HepG2 (cell line): ENCODE measurements at regions of chr5 and their contacts with region 1.

Region 1: DNA sequence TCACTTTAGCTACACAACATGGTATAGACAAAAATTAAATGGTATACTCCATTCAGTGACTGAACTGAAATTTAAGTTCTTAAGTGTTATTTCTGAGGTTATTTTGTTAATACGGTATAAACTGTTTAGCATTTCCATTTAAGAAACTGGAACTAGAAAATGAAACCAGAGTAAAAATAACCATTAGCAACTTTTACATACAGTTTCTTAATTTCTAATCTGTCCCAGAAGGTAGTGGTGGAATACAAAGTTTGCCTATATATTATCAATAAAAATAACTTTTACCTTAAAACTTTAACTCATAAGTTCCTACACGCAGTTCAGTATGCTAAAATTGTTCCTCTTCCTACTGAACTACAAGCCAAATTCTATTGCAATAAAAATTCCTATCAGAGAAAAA is 10.3 kb downstream of the GOLPH3 start:
- DNase-seq: no peak
- ATAC-seq: no peak
- H3K4me3 ChIP-seq: no peak overlapping the region
- H3K27ac ChIP-seq: no peak overlapping the region
- H3K4me1 ChIP-seq: peaks cover 75% of the 10 kb centered on the region
- H3K27me3 ChIP-seq: no peaks in the 10 kb centered on the region
- CTCF ChIP-seq: no peak
- EP300 ChIP-seq: no peak
- POLR2A ChIP-seq: no peak
- RAD21 ChIP-seq: no peak

Region 2: DNA sequence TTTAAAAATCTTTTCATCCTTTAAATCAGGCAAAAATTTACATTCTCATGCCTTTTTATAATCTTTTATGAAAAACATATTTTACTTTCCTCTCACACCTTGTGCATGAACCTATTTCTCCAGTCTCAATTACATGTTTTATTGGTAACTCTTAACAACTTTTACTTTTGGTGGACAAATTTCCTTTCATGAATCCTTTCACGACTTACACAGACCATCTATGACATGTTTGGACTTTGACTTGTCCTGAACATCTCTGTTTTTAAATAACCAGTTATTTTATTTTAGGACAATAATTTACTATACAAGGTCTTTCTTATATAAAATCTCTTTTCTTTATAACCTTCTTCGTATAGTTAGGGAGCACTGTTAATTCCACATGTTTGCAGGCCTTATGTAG is 175.4 kb after region 1 on chr5:
- CTCF ChIA-PET with region 1: no interaction called
- POLR2A ChIA-PET with region 1: no interaction called
- in situ Hi-C with region 1: no loop called
- intact Hi-C with region 1: loop called (anchors 10 kb)
- DNase-seq: no peak
- ATAC-seq: no peak
- H3K4me3 ChIP-seq: no peak overlapping the region
- H3K27ac ChIP-seq: no peak overlapping the region
- H3K4me1 ChIP-seq: peaks cover 36% of the 10 kb centered on the region
- H3K27me3 ChIP-seq: no peaks in the 10 kb centered on the region
- CTCF ChIP-seq: no peak
- EP300 ChIP-seq: no peak
- POLR2A ChIP-seq: no peak
- RAD21 ChIP-seq: no peak